ENCODE measurements at regions of chr19 and their contacts with region 1.

Region 1: DNA sequence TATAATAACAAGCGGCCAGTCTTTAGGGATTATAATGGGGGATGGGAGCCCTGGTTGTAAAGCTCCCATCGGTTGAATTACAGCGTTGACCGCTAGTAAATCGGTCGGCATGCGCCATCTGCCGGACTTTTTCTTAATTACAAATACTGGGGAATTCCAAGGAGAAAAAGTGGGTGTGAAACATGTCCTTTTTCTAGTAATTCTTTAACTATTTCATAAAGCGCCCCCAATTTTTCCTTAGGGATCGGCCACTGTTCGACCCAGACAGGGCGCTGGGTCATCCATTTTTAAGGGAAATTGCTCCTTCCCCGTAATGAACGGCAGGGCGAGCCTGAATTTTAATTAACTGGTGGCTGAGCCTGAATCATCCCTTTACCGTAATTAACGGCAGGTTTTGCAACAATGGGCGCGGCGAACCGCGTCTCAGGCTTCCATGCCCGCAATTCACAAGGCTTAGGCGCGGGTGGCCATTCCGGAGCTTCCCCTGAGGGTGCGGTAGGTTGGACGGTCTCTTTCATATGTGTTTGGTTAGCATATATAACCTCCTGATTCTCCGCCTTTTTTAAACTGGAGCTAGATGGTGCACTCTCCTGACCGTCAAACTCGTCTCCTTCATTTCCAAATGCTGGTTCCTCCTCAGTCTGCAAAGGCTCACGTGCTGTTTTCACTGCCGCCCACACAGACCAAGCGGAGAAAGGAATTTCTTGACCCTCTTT is 30.2 kb upstream of the EVI5L start:
- DNase-seq: peak; percentile 36 to 73
- ATAC-seq: peak in 7 of 8 donors; percentile 38 to 87 (median 77)
- H3K4me3 ChIP-seq: peak overlapping the region in 6 of 10 donors; percentile 4 to 40 (median 12)
- H3K27ac ChIP-seq: peak overlapping the region in 1 of 10 donors; percentile 60
- H3K4me1 ChIP-seq: peaks cover 0 to 16% (median 0%) of the 10 kb centered on the region in 9 donors
- H3K27me3 ChIP-seq: peaks cover 0 to 52% (median 34%) of the 10 kb centered on the region in 7 donors
- CTCF ChIP-seq: peak; percentile 15 to 71 (median 55)

Region 2: GRCh38 chr19:7104747-7105447 is 694.9 kb before region 1 on chr19:
- intact Hi-C with region 1: loop called in 4 of 10 experiments (anchors 5 kb)
- DNase-seq: no peak
- ATAC-seq: peak in 2 of 8 donors; percentile 8 to 26
- H3K4me3 ChIP-seq: no peak overlapping the region
- H3K27ac ChIP-seq: no peak overlapping the region
- H3K4me1 ChIP-seq: peaks cover 0 to 12% (median 1%) of the 10 kb centered on the region in 9 donors
- H3K27me3 ChIP-seq: no peaks in the 10 kb centered on the region
- CTCF ChIP-seq: no peak

Region 3: DNA sequence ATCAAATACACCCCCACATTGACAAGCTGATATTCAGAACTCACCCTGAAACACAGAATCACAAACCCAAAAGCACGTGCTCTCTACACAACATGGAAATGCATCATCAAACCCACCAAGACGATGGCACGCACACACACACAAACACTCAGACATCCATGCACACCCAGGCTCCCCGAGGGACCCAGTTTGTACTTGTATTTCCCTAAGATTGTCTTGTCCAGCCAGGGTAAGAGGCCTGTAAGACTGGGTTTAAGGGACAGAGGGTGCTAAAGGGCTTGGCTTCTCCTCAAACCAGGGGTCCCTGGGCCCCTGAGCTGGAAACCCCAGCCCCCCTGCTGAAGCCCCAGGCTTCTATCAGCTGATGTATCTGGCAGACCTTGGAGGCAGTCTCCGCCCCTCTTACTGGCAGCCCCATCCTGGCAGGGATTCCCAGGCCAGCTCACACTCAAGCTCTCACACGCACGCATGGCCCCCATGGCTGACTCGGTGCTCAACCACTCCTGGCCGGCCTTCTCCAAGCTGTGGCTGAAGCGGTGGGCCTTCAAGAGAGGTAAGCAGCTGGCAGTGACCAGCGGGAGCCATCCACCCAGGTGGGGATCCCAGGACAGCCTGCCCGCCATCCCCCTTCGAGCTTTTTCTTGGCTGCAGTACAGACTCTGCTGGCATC is 444.5 kb before region 1 on chr19:
- intact Hi-C with region 1: loop called in 7 of 10 experiments (anchors 2 to 10 kb)
- DNase-seq: no peak
- ATAC-seq: no peak
- H3K4me3 ChIP-seq: no peak overlapping the region
- H3K27ac ChIP-seq: no peak overlapping the region
- H3K4me1 ChIP-seq: peaks cover 0 to under 1% (median 0%) of the 10 kb centered on the region in 9 donors
- H3K27me3 ChIP-seq: no peaks in the 10 kb centered on the region
- CTCF ChIP-seq: no peak

Region 4: GRCh38 chr19:7575434-7576040 is 224.3 kb before region 1 on chr19:
- intact Hi-C with region 1: loop called in 2 of 10 experiments (anchors 5 to 10 kb)
- DNase-seq: no peak
- ATAC-seq: no peak
- H3K4me3 ChIP-seq: no peak overlapping the region
- H3K27ac ChIP-seq: no peak overlapping the region
- H3K4me1 ChIP-seq: no peaks in the 10 kb centered on the region
- H3K27me3 ChIP-seq: peaks cover 0 to 11% (median 0%) of the 10 kb centered on the region in 7 donors
- CTCF ChIP-seq: no peak

Region 5: GRCh38 chr19:7680606-7681339 is 119.0 kb before region 1 on chr19 and contains the start of gene TRAPPC5:
- intact Hi-C with region 1: loop called in 4 of 10 experiments (anchors 5 to 10 kb)
- DNase-seq: peak; percentile 84 to 90
- ATAC-seq: peak; percentile 87 to 93 (median 88)
- H3K4me3 ChIP-seq: peak within 1 kb of the TSS; percentile 94 to 100 (median 100)
- H3K27ac ChIP-seq: peak within 1 kb of the TSS; percentile 33 to 99 (median 90)
- H3K4me1 ChIP-seq: peaks cover 0 to 37% (median 13%) of the 10 kb centered on the region in 9 donors
- H3K27me3 ChIP-seq: peaks cover 0 to 27% (median 15%) of the 10 kb centered on the region in 7 donors
- CTCF ChIP-seq: peak; percentile 86 to 100 (median 98)
- total RNA-seq, gene TRAPPC5: 75.3 to 132 (median 86.0) TPM

Region 6: DNA sequence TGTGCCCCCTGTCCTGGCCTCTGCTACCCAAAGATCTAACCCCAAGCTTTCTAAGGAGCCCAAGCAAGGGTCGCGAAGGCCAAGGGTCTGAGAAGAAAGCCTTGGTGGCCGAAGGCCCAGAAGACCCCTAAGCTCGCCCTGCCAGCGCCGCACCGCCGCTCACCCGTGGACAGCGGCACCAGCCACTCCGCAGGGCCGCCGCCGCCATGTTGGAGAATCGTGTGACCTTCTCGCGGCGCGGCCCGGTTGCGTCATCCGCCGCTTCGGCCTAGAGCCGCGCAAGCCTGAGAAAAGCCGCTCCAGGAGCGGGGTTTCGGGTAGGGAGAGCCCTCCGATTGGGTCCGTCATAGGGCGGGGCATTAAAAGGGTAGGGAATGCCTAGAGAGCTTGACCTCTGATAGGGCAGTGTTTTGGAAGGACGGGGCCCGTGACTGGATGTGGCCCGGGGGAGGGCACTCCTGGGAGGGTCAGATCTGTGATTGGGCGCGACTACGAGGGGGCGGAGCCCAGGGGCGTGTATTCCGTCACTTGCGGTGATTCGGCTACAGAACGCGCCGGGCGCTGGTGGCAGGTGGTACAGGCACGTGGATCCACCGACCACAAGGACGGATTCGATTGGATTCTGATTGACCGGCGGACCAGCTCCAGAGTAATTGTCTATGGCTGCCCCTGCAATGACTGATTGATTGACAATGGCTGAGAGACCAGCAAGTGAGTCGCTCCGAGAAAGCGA is 143.8 kb after region 1 on chr19 and contains the start of gene TIMM44:
- intact Hi-C with region 1: no loop called
- DNase-seq: peak; percentile 98 to 99
- ATAC-seq: peak; percentile 98 to 99 (median 99)
- H3K4me3 ChIP-seq: peak within 1 kb of the TSS; percentile 67 to 99 (median 89)
- H3K27ac ChIP-seq: peak within 1 kb of the TSS; percentile 85 to 98 (median 96)
- H3K4me1 ChIP-seq: peaks cover 4 to 26% (median 13%) of the 10 kb centered on the region in 9 donors
- H3K27me3 ChIP-seq: no peaks in the 10 kb centered on the region
- CTCF ChIP-seq: no peak
- total RNA-seq, gene TIMM44: 54.9 to 97.5 (median 71.4) TPM

Measured in heart right ventricle (tissue), 16 donors.